Naive thymus-derived CD4-positive, alpha-beta T cell (primary cell): ENCODE measurements at regions of chr17 and their contacts with region 1.

Region 1: DNA sequence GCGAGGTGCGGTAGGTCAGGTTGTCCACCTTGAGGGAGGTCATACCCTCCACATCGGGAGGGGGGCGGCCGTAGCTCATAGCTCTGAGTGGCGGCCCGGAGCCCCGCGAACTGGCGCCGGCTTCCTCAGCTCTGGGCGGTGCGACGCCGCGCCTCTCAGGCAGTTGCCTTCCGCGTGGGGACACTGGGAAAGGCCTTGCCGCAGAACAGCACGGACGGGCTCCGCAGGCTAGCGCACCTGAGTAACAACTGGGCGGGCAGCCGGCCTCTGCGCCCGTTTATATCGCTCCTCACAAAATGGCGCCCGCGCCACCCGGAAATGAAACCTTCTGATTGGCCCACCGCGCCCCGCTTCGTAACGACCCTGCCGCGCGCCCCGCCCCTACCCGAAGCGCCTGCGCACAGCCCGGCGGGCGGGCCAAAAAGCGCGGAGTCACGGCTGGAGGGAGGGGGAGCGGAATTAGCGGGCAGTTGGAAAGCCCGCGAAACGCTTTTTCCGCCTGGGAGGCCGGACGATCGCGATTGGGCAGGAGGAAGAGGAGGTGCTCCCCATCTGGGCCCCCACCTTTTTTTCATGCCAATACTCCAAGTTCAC is at the start of gene SRSF2:
- DNase-seq: peak; percentile 98 to 100 (median 99)
- ATAC-seq: peak; percentile 86
- H3K4me3 ChIP-seq: peak within 1 kb of the TSS; percentile 97
- H3K4me3 Mint-ChIP-seq: peak within 1 kb of the TSS; percentile 90 to 99 (median 97)
- H3K27ac ChIP-seq: peak within 1 kb of the TSS; percentile 96
- H3K27ac Mint-ChIP-seq: peak within 1 kb of the TSS; percentile 95 to 100 (median 99)
- H3K4me1 ChIP-seq: peaks cover 45 to 49% of the 10 kb centered on the region in 2 donors
- H3K4me1 Mint-ChIP-seq: peaks cover 26 to 66% (median 58%) of the 10 kb centered on the region in 7 donors
- H3K27me3 ChIP-seq: no peaks in the 10 kb centered on the region
- H3K27me3 Mint-ChIP-seq: no peaks in the 10 kb centered on the region
- total RNA-seq, gene SRSF2: 327 to 363 (median 351) TPM

Region 2: DNA sequence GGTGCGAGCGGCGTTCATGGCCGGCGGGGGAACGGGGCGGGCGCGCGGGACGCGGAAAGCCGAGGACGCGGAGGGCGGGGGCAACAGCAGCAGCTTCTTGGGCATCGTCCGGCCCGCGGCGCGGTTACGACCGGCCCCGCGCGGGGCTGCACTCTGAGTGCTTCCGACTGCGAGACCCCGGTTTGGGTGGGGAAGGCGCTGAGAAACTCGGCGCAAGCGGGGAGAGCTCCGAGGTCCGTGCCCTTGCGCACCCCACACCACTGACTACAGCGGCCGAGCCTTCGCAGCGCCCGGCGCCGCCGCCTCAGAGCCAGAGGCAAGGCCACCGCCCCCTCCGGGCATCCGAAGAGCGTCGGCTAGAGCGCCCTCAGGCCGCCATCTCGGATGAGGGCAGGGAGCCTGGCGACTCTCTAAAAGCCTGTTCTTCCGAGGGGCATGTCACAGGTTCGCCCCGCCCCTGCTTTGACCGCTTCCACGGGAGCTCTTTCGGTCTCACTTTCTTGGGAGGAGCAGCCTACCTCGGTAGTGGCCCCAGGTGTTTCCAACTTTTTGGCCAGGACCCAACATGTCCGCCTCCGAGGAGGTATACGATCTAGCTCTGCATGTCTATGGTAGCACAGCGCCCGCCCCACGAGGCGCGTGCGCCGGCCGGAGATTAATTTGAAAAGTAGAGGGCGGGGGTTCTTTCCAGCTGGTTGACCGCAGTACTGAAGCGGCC is 383.4 kb before region 1 on chr17 and contains the start of gene PRPSAP1:
- CTCF ChIA-PET with region 1: no interaction called
- POLR2A ChIA-PET with region 1: no interaction called
- intact Hi-C with region 1: loop called in 1 of 2 experiments (anchors 5 kb)
- DNase-seq: peak; percentile 76 to 89 (median 82)
- ATAC-seq: peak; percentile 98
- H3K4me3 ChIP-seq: peak within 1 kb of the TSS; percentile 97
- H3K4me3 Mint-ChIP-seq: peak within 1 kb of the TSS; percentile 89 to 99 (median 94)
- H3K27ac ChIP-seq: peak within 1 kb of the TSS; percentile 81
- H3K27ac Mint-ChIP-seq: peak within 1 kb of the TSS; percentile 91 to 100 (median 96)
- H3K4me1 ChIP-seq: no peaks in the 10 kb centered on the region
- H3K4me1 Mint-ChIP-seq: peaks cover 13 to 35% (median 19%) of the 10 kb centered on the region in 7 donors
- H3K27me3 ChIP-seq: no peaks in the 10 kb centered on the region
- H3K27me3 Mint-ChIP-seq: no peaks in the 10 kb centered on the region
- total RNA-seq, gene PRPSAP1: 19.6 to 55.9 (median 45.8) TPM

Region 3: GRCh38 chr17:76671123-76671911 is 65.9 kb before region 1 on chr17:
- CTCF ChIA-PET with region 1: no interaction called
- POLR2A ChIA-PET with region 1: interaction called, 12 read pairs
- intact Hi-C with region 1: loop called (anchors 1 kb)
- DNase-seq: peak; percentile 90 to 99 (median 98)
- ATAC-seq: peak; percentile 99
- H3K4me3 ChIP-seq: peak overlapping the region; percentile 76
- H3K4me3 Mint-ChIP-seq: peak overlapping the region; percentile 81 to 98 (median 92)
- H3K27ac ChIP-seq: peak overlapping the region; percentile 84
- H3K27ac Mint-ChIP-seq: peak overlapping the region; percentile 88 to 99 (median 96)
- H3K4me1 ChIP-seq: peaks cover 19 to 26% of the 10 kb centered on the region in 2 donors
- H3K4me1 Mint-ChIP-seq: peaks cover 20 to 43% (median 31%) of the 10 kb centered on the region in 7 donors
- H3K27me3 ChIP-seq: no peaks in the 10 kb centered on the region
- H3K27me3 Mint-ChIP-seq: peaks cover 0 to 10% (median 0%) of the 10 kb centered on the region in 5 donors

Region 4: GRCh38 chr17:76753061-76753961 is 16.1 kb after region 1 on chr17:
- CTCF ChIA-PET with region 1: no interaction called
- POLR2A ChIA-PET with region 1: interaction called, 64 read pairs
- intact Hi-C with region 1: loop called (anchors 1 kb)
- DNase-seq: peak in 8 of 9 donors; percentile 18 to 93 (median 86)
- ATAC-seq: peak; percentile 93
- H3K4me3 ChIP-seq: peak overlapping the region; percentile 55
- H3K4me3 Mint-ChIP-seq: peak overlapping the region; percentile 84 to 91 (median 89)
- H3K27ac ChIP-seq: peak overlapping the region; percentile 83
- H3K27ac Mint-ChIP-seq: peak overlapping the region; percentile 96 to 99 (median 99)
- H3K4me1 ChIP-seq: peaks cover 14 to 20% of the 10 kb centered on the region in 2 donors
- H3K4me1 Mint-ChIP-seq: peaks cover 19 to 30% (median 28%) of the 10 kb centered on the region in 7 donors
- H3K27me3 ChIP-seq: no peaks in the 10 kb centered on the region
- H3K27me3 Mint-ChIP-seq: no peaks in the 10 kb centered on the region

Region 5: DNA sequence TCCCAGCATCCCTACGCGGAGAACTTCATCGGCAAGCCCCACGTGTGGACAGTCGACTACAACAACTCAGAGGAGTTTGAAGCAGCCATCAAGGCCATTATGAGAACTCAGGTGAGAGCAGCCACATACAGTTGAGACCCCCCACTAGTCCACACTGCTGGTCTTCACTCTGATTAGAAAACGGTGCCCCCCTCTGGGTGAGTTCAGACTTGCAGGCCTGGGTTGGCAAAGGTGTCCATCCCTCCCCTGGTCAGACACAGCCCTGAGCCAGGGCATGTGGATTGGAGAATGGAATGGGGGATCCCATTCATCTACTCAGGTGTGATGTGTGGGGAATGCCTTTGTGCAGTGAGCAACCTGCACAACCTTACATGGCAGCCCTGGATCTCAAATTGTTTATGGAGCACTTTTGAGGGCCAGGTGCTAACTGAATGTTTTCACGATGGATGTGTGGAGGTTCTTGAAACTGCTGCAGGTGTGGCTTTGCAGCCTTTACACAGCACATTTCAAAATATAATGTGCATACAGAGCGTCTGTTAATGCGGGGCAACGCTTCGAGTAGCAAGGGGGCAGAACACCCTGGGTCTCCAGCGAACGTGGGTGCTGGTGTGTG is 203.7 kb after region 1 on chr17:
- CTCF ChIA-PET with region 1: no interaction called
- POLR2A ChIA-PET with region 1: no interaction called
- intact Hi-C with region 1: no loop called
- DNase-seq: no peak
- ATAC-seq: no peak
- H3K4me3 ChIP-seq: no peak overlapping the region
- H3K4me3 Mint-ChIP-seq: no peak overlapping the region
- H3K27ac ChIP-seq: no peak overlapping the region
- H3K27ac Mint-ChIP-seq: no peak overlapping the region
- H3K4me1 ChIP-seq: no peaks in the 10 kb centered on the region
- H3K4me1 Mint-ChIP-seq: peaks cover 0 to 3% (median 0%) of the 10 kb centered on the region in 7 donors
- H3K27me3 ChIP-seq: no peaks in the 10 kb centered on the region
- H3K27me3 Mint-ChIP-seq: peaks cover 0 to 10% (median 0%) of the 10 kb centered on the region in 5 donors

Region 6: GRCh38 chr17:76957678-76958464 is 220.7 kb after region 1 on chr17:
- CTCF ChIA-PET with region 1: no interaction called
- POLR2A ChIA-PET with region 1: no interaction called
- intact Hi-C with region 1: no loop called
- DNase-seq: no peak
- ATAC-seq: no peak
- H3K4me3 ChIP-seq: no peak overlapping the region
- H3K4me3 Mint-ChIP-seq: no peak overlapping the region
- H3K27ac ChIP-seq: no peak overlapping the region
- H3K27ac Mint-ChIP-seq: no peak overlapping the region
- H3K4me1 ChIP-seq: no peaks in the 10 kb centered on the region
- H3K4me1 Mint-ChIP-seq: peaks cover 0 to 4% (median 0%) of the 10 kb centered on the region in 7 donors
- H3K27me3 ChIP-seq: no peaks in the 10 kb centered on the region
- H3K27me3 Mint-ChIP-seq: no peaks in the 10 kb centered on the region

Region 7: GRCh38 chr17:77088455-77089123 is 351.4 kb after region 1 on chr17:
- CTCF ChIA-PET with region 1: no interaction called
- POLR2A ChIA-PET with region 1: interaction called, 7 read pairs
- intact Hi-C with region 1: loop called in 1 of 2 experiments (anchors 5 kb)
- DNase-seq: peak; percentile 61 to 86 (median 84)
- ATAC-seq: peak; percentile 96
- H3K4me3 ChIP-seq: peak overlapping the region; percentile 62
- H3K4me3 Mint-ChIP-seq: peak overlapping the region; percentile 89 to 100 (median 97)
- H3K27ac ChIP-seq: peak overlapping the region; percentile 89
- H3K27ac Mint-ChIP-seq: peak overlapping the region; percentile 91 to 100 (median 98)
- H3K4me1 ChIP-seq: peaks cover 23 to 31% of the 10 kb centered on the region in 2 donors
- H3K4me1 Mint-ChIP-seq: peaks cover 29 to 63% (median 51%) of the 10 kb centered on the region in 7 donors
- H3K27me3 ChIP-seq: no peaks in the 10 kb centered on the region
- H3K27me3 Mint-ChIP-seq: peaks cover 0 to 6% (median 0%) of the 10 kb centered on the region in 5 donors

Region 8: GRCh38 chr17:78133971-78134898 is 1397.1 kb after region 1 on chr17:
- CTCF ChIA-PET with region 1: no interaction called
- POLR2A ChIA-PET with region 1: no interaction called
- intact Hi-C with region 1: loop called (anchors 5 kb)
- DNase-seq: peak in 8 of 9 donors; percentile 72 to 89 (median 84)
- ATAC-seq: peak; percentile 58
- H3K4me3 ChIP-seq: peak overlapping the region; percentile 95
- H3K4me3 Mint-ChIP-seq: peak overlapping the region; percentile 81 to 99 (median 92)
- H3K27ac ChIP-seq: peak overlapping the region; percentile 77
- H3K27ac Mint-ChIP-seq: peak overlapping the region; percentile 68 to 95 (median 87)
- H3K4me1 ChIP-seq: peaks cover 56 to 66% of the 10 kb centered on the region in 2 donors
- H3K4me1 Mint-ChIP-seq: peaks cover 55 to 73% (median 66%) of the 10 kb centered on the region in 7 donors
- H3K27me3 ChIP-seq: no peaks in the 10 kb centered on the region
- H3K27me3 Mint-ChIP-seq: peaks cover 0 to 3% (median 0%) of the 10 kb centered on the region in 5 donors